Psoas muscle (tissue), 8 donors: ENCODE measurements at regions of chr11 and their contacts with region 1.

Region 1: DNA sequence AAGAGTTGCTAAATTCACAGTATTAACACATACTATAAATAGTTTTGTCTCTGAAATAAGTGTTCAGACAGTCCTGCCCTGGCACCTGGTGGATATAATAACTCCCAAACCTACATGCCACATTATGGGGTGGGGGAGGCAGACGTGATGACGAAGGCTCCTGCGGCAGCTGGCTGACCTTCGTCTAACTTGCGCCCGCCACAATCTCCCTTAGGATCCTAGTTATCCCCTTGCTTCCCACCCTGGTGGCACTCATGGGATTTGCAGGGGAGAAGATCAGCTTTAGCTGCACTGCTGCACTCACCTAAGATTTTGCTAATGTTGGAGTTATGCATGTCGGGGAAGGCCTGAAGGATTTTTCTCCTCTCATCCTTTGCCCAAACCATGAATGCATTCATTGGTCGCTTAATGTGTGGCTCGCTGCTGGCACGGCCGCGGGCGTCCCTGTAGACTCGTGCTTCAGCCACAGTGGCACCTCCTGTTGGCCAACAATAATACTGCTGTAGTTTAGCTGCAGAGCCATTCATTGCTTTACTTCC is 367.6 kb downstream of the SOX6 start:
- DNase-seq: peak in 1 of 2 donors; percentile 49
- ATAC-seq: peak; percentile 67 to 94 (median 81)
- H3K4me3 ChIP-seq: no peak overlapping the region
- H3K27ac ChIP-seq: peak overlapping the region; percentile 39
- H3K4me1 ChIP-seq: peaks cover 38% of the 10 kb centered on the region
- H3K27me3 ChIP-seq: no peaks in the 10 kb centered on the region
- CTCF ChIP-seq: peak; percentile 36

Region 2: DNA sequence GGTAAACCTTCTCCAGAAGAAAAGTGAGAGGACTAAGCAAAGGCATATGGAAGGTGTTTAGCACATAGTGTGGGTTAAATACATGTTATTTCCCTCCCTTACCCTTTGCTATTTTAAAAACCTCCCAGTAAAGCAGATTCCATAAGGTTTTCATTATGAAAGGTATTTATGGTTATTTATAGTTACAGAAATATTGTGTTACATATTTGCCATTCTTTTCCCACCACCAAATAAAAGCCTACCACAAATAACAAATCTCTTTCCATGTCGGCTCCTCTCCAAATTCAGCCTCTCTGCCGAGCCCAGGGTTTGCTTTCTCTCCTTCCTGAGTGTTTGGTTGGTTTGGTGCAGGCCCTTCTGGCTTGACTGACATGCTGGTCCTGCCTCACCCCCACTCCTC is 809.6 kb before region 1 on chr11:
- intact Hi-C with region 1: loop called in 1 of 2 experiments (anchors 5 kb)
- DNase-seq: no peak
- ATAC-seq: no peak
- H3K4me3 ChIP-seq: no peak overlapping the region
- H3K27ac ChIP-seq: no peak overlapping the region
- H3K4me1 ChIP-seq: no peaks in the 10 kb centered on the region
- H3K27me3 ChIP-seq: peaks cover 0 to 3% (median 0%) of the 10 kb centered on the region in 3 donors
- CTCF ChIP-seq: no peak

Region 3: DNA sequence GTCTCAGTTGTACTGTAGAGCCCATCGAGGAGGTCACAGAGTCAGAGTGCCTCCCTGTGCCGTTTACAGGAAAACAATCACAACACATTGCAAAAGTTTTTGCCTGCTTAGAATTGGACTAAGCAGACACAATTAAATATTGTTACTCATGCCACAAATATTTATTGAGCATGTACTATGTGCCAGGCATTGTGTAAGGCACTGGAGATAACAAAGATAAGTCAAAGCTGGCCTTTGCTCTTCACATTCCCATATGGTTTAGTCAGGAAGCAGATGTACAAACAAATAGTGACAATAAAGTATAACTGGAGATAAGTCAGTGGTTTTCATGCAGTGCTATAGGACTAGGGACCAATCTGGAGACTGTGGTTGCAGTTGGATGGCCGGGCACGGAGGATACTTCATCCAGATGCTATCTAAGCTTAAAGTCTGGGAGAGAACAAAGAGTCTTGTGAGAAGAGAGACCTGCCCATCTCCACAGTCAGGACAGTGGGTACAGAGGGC is 323.3 kb before region 1 on chr11:
- intact Hi-C with region 1: no loop called
- DNase-seq: no peak
- ATAC-seq: no peak
- H3K4me3 ChIP-seq: no peak overlapping the region
- H3K27ac ChIP-seq: no peak overlapping the region
- H3K4me1 ChIP-seq: peaks cover 19% of the 10 kb centered on the region
- H3K27me3 ChIP-seq: no peaks in the 10 kb centered on the region
- CTCF ChIP-seq: no peak

Region 4: GRCh38 chr11:15852179-15852578 is 136.6 kb before region 1 on chr11:
- intact Hi-C with region 1: loop called (anchors 5 to 10 kb)
- DNase-seq: no peak
- ATAC-seq: peak in 3 of 4 donors; percentile 63 to 85 (median 66)
- H3K4me3 ChIP-seq: no peak overlapping the region
- H3K27ac ChIP-seq: no peak overlapping the region
- H3K4me1 ChIP-seq: no peaks in the 10 kb centered on the region
- H3K27me3 ChIP-seq: no peaks in the 10 kb centered on the region
- CTCF ChIP-seq: peak; percentile 62

Region 5: GRCh38 chr11:15969281-15969680 is 19.5 kb before region 1 on chr11:
- intact Hi-C with region 1: no loop called
- DNase-seq: peak; percentile 53 to 69
- ATAC-seq: peak; percentile 83 to 92 (median 86)
- H3K4me3 ChIP-seq: peak overlapping the region; percentile 55
- H3K27ac ChIP-seq: peak overlapping the region; percentile 95
- H3K4me1 ChIP-seq: peaks cover 53% of the 10 kb centered on the region
- H3K27me3 ChIP-seq: no peaks in the 10 kb centered on the region
- CTCF ChIP-seq: no peak